ENCODE measurements at regions of chr9 and their contacts with region 1.

Region 1: GRCh38 chr9:136944519-136945279 is at the starts of genes C8G and FBXW5:
- DNase-seq: peak; percentile 90 to 92 (median 91)
- H3K4me3 ChIP-seq: peak within 1 kb of the TSS; percentile 79 to 86 (median 79)
- H3K4me3 Mint-ChIP-seq: peak within 1 kb of the TSS; percentile 73 to 83
- H3K27ac ChIP-seq: peak within 1 kb of the TSS; percentile 47 to 80
- H3K27ac Mint-ChIP-seq: peak within 1 kb of the TSS in 6 of 7 donors; percentile 31 to 77 (median 60)
- H3K4me1 ChIP-seq: peaks cover 19 to 32% of the 10 kb centered on the region in 2 donors
- H3K4me1 Mint-ChIP-seq: peaks cover 13% of the 10 kb centered on the region
- H3K27me3 ChIP-seq: no peaks in the 10 kb centered on the region
- H3K27me3 Mint-ChIP-seq: peaks cover 0 to 6% (median 4%) of the 10 kb centered on the region in 3 donors
- CTCF ChIP-seq: peak; percentile 97
- polyA plus RNA-seq, gene C8G: 0.55 to 0.72 TPM in 2 of 3 donors, not detected in the other
- polyA plus RNA-seq, gene FBXW5: 85.3 to 117 (median 92.7) TPM

Region 2: DNA sequence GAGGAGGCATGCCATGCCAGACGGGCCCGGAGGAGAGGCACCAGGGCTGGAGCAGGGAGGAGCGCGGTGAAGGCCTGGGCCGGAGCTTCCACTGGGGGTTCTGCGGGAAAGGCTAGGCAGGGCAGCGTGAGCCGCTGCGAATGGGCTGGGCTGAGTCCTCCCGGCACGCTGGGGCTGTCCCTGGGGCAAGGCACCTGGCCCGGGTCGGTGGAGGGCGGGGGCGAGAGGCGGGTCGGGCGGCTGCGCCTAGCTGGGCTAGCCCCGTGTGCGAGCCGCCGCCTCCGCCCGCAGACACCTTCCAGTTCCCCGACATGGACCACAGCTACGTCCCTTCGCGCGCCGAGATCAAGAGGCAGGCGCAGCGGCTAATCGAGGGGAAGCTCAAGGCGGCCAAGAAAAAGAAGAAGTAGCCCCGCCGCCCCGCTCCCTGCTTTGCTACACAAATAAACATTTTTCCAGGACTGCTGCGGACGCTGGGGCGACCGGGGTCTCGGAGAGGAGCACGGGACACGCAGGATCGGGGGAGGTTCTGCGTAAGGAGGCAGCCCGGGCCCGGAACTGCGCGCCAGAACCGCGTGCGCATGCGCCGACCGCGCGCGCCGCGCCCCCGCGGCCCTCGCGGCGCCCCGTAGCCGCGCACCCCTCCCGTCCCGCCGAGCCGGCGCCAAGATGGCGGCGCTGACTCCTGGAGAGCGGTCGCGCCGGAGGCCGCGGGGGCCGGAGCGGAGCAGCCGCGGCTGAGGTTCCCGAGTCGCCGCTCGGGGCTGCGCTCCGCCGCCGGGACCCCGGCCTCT is 137.2 kb before region 1 on chr9 and contains the start of gene RABL6:
- intact Hi-C with region 1: loop called in 1 of 2 experiments (anchors 10 kb)
- DNase-seq: peak; percentile 61 to 75 (median 67)
- H3K4me3 ChIP-seq: peak within 1 kb of the TSS; percentile 74 to 92 (median 87)
- H3K4me3 Mint-ChIP-seq: peak within 1 kb of the TSS; percentile 86 to 89
- H3K27ac ChIP-seq: peak within 1 kb of the TSS; percentile 72 to 84
- H3K27ac Mint-ChIP-seq: peak within 1 kb of the TSS; percentile 80 to 93 (median 88)
- H3K4me1 ChIP-seq: peaks cover 21 to 35% of the 10 kb centered on the region in 2 donors
- H3K4me1 Mint-ChIP-seq: peaks cover 28% of the 10 kb centered on the region
- H3K27me3 ChIP-seq: peaks cover 0 to 2% of the 10 kb centered on the region in 2 donors
- H3K27me3 Mint-ChIP-seq: peaks cover 1 to 8% (median 3%) of the 10 kb centered on the region in 3 donors
- CTCF ChIP-seq: no peak
- polyA plus RNA-seq, gene RABL6: 6.7 to 30.9 (median 8.1) TPM

Region 3: DNA sequence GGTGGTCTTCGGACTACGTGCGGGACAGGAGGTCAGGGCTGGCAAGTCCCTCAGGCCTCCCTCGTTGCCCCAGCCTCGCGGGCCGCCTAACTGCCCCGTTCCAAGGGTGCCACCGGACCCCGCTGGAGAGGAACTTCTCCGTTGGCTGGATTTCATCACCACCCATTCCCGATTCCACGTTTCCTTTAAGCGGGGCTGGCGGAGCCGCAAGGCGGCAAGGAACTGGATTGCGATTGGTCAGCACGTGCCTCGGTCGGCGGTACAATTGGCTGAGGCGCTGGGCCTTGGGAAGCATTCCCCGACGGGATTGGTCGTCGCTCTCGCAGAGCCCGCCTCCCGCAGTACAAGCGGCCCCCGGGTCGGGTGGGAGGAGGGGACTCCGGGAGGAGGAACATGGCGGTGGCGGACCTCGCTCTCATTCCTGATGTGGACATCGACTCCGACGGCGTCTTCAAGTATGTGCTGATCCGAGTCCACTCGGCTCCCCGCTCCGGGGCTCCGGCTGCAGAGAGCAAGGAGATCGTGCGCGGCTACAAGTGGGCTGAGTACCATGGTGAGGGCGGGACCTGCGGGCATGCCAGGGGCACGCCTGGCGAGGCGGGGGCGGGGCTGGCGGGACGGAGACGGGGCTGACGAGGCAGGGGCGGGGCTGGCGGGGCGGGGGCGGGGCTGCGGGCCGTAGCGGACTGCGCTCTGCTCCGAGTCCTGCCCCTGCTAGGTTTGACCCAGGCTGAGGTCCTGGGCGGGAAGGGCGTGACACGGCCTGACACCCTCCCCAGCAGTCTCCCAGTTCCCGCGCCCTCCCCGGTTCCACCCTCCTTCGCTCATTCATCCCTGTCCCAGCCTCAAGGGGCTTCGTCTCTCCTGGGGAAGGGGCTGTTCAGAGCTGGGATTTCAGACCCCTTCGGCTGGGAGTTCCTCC is 95.4 kb before region 1 on chr9 and contains the start of gene PHPT1:
- intact Hi-C with region 1: loop called in 1 of 2 experiments (anchors 10 kb)
- DNase-seq: peak; percentile 98
- H3K4me3 ChIP-seq: peak within 1 kb of the TSS; percentile 74 to 93 (median 76)
- H3K4me3 Mint-ChIP-seq: peak within 1 kb of the TSS; percentile 92 to 97
- H3K27ac ChIP-seq: peak within 1 kb of the TSS; percentile 31 to 73
- H3K27ac Mint-ChIP-seq: peak within 1 kb of the TSS; percentile 84 to 97 (median 96)
- H3K4me1 ChIP-seq: peaks cover 21 to 34% of the 10 kb centered on the region in 2 donors
- H3K4me1 Mint-ChIP-seq: peaks cover 20% of the 10 kb centered on the region
- H3K27me3 ChIP-seq: peaks cover 12 to 24% of the 10 kb centered on the region in 2 donors
- H3K27me3 Mint-ChIP-seq: peaks cover 24 to 33% (median 24%) of the 10 kb centered on the region in 3 donors
- CTCF ChIP-seq: no peak
- polyA plus RNA-seq, gene PHPT1: 70.0 to 163 (median 94.3) TPM

Region 4: GRCh38 chr9:136885950-136886578 is 58.6 kb before region 1 on chr9 and contains the start of gene TRAF2:
- intact Hi-C with region 1: loop called in 1 of 2 experiments (anchors 2 kb)
- DNase-seq: peak; percentile 98 to 99 (median 98)
- H3K4me3 ChIP-seq: peak within 1 kb of the TSS; percentile 74 to 85 (median 80)
- H3K4me3 Mint-ChIP-seq: peak within 1 kb of the TSS; percentile 86 to 91
- H3K27ac ChIP-seq: peak within 1 kb of the TSS in 1 of 2 donors; percentile 82
- H3K27ac Mint-ChIP-seq: peak within 1 kb of the TSS; percentile 24 to 82 (median 63)
- H3K4me1 ChIP-seq: peaks cover 31 to 39% of the 10 kb centered on the region in 2 donors
- H3K4me1 Mint-ChIP-seq: peaks cover 37% of the 10 kb centered on the region
- H3K27me3 ChIP-seq: no peaks in the 10 kb centered on the region
- H3K27me3 Mint-ChIP-seq: peaks cover 2% of the 10 kb centered on the region in 3 donors
- CTCF ChIP-seq: no peak
- polyA plus RNA-seq, gene TRAF2: 1.6 to 6.1 (median 2.0) TPM

Region 5: DNA sequence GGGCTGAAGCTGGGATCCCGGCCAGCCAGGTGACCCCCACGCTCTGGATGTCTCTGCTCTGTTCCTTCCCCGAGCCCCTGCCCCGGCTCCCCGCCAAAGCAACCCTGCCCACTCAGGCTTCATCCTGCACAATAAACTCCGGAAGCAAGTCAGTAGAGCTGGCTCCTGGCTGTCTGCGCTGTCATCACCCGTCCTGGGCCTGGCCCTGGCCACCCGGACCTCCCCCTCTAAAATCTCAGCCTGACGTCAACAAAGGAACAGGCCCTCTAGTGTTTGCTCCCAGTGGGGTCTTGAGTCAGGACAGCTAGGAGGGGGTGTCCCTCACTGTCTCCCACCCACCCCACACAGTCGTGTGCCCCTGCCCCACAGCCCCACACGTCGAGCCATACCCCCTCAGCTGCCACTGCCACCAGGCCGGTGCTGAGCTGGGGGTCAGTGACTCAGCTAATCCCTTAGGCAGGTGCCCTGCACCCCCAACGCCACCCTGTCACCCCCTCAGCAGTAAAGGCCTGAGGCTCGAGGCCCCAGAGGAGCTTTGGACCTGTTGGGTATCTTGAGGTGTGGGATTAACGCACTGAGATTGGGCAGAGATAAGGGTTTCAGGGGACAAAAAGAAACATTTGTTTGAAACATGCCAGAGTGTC is 37.0 kb after region 1 on chr9:
- intact Hi-C with region 1: no loop called
- DNase-seq: no peak
- H3K4me3 ChIP-seq: no peak overlapping the region
- H3K4me3 Mint-ChIP-seq: peak overlapping the region in 1 of 2 donors; percentile 6
- H3K27ac ChIP-seq: no peak overlapping the region
- H3K27ac Mint-ChIP-seq: no peak overlapping the region
- H3K4me1 ChIP-seq: peaks cover 5 to 10% of the 10 kb centered on the region in 2 donors
- H3K4me1 Mint-ChIP-seq: no peaks in the 10 kb centered on the region
- H3K27me3 ChIP-seq: peaks cover 19 to 46% of the 10 kb centered on the region in 2 donors
- H3K27me3 Mint-ChIP-seq: peaks cover 39 to 68% (median 46%) of the 10 kb centered on the region in 3 donors
- CTCF ChIP-seq: no peak

Region 6: DNA sequence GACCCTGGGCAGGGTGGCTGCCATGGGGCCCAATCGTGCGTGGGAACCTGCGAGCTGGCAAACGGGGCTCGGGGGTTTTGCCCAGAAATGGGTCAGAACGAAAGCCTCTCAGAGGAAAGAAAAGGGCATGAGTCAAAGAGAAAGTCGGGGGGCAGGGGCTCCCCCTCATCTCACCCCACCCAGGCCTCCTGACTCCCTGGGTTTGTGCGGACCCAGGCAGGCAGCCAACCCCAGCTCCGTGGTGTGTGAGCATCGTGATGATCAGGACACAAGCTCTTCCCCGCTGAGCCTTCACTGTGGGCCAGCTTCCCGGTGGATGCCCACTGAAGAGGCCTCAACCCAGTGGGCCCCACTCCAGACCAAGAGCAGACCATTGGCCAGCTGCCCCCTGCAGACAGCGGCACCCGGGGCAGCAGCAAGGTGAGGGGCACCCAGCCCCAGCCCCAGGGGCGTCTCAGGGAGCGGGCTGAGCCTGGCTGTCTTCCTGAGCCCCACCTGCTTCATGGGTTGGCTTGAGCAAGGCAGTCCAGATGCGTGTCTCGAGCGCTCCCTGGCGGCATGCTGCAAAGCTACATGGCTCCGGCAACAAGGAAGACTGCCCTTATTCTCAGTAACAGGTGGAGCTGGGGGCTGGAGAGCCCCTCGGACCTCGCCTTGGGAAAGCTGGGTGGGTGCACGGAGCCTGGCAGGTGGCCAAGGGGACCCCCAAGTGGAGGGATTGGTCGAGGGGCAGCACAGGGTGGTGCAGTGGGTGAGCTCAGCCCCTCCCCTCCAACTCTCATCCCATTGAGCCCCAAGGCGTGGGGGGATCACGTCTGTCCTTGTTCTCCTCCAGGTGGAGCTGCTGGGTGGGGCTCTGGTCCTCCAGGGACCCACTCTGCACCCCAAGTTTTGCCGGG is 90.4 kb after region 1 on chr9:
- intact Hi-C with region 1: loop called in 1 of 2 experiments (anchors 10 kb)
- DNase-seq: peak; percentile 78 to 84 (median 84)
- H3K4me3 ChIP-seq: peak overlapping the region; percentile 0 to 74 (median 29)
- H3K4me3 Mint-ChIP-seq: peak overlapping the region; percentile 78 to 89
- H3K27ac ChIP-seq: peak overlapping the region; percentile 71 to 83
- H3K27ac Mint-ChIP-seq: peak overlapping the region; percentile 86 to 92 (median 90)
- H3K4me1 ChIP-seq: peaks cover 45 to 57% of the 10 kb centered on the region in 2 donors
- H3K4me1 Mint-ChIP-seq: peaks cover 37% of the 10 kb centered on the region
- H3K27me3 ChIP-seq: no peaks in the 10 kb centered on the region
- H3K27me3 Mint-ChIP-seq: no peaks in the 10 kb centered on the region
- CTCF ChIP-seq: peak; percentile 90